Uterus (tissue), 4 donors: ENCODE measurements at regions of chr20 and their contacts with region 1.

Region 1: GRCh38 chr20:47886460-47887041 is 101.3 kb upstream of the SULF2 start:
- DNase-seq: no peak
- H3K4me3 ChIP-seq: no peak overlapping the region
- H3K27ac ChIP-seq: no peak overlapping the region
- H3K4me1 ChIP-seq: no peaks in the 10 kb centered on the region
- H3K27me3 ChIP-seq: no peaks in the 10 kb centered on the region
- CTCF ChIP-seq: no peak
- POLR2A ChIP-seq: no peak

Region 2: GRCh38 chr20:47821481-47822439 is 64.8 kb before region 1 on chr20:
- intact Hi-C with region 1: loop called (anchors 10 kb)
- DNase-seq: no peak
- H3K4me3 ChIP-seq: no peak overlapping the region
- H3K27ac ChIP-seq: no peak overlapping the region
- H3K4me1 ChIP-seq: no peaks in the 10 kb centered on the region
- H3K27me3 ChIP-seq: no peaks in the 10 kb centered on the region
- CTCF ChIP-seq: no peak
- POLR2A ChIP-seq: no peak

Region 3: GRCh38 chr20:48523212-48523941 is 636.8 kb after region 1 on chr20:
- intact Hi-C with region 1: loop called (anchors 10 kb)
- DNase-seq: no peak
- H3K4me3 ChIP-seq: no peak overlapping the region
- H3K27ac ChIP-seq: no peak overlapping the region
- H3K4me1 ChIP-seq: no peaks in the 10 kb centered on the region
- H3K27me3 ChIP-seq: no peaks in the 10 kb centered on the region
- CTCF ChIP-seq: no peak
- POLR2A ChIP-seq: no peak